Posterior cingulate gyrus (tissue), 11 donors: ENCODE measurements at regions of chr17 and their contacts with region 1.

Region 1: DNA sequence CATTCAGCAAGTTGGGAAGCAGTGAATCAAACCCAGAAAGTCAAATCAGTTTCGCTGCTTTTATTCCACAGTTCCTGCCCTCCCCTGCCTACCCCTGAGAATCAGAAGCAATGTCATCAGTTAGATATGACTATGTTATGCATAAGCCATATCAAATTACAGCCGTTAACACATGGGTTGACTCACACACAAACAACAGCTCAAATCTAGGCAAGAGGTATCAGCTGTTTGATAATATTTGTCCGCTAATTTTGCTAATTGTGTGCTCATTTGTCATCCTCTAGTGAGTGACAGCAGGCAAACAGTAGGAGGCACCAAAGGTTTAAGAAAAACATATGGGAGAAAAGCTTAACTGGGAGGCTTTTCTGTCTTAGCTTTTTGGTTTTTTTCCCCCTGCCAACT is 327.4 kb upstream of the CCL2 start:
- DNase-seq: no peak

Region 2: DNA sequence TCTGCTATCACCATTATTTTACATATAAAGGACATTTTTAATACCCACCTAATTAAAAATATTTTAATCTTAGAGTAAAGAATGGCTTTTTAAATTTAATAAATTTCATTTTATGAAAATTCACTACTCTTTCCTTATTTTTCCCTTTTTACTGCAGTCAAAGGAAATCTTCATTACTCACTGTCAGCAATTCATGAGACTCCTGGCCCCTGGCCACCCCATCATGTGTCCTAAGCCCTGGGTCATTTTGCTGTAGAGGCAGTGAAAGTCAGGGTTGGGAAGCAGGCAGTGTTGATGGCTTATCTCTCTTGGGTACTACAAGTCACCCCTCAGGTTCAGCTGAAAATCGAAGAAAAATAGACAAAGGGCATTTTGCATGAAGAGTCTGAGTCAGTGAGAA is 141.3 kb before region 1 on chr17:
- intact Hi-C with region 1: loop called (anchors 10 kb)
- DNase-seq: no peak

Region 3: GRCh38 chr17:33949100-33949499 is 21.4 kb after region 1 on chr17:
- intact Hi-C with region 1: no loop called
- DNase-seq: no peak

Region 4: DNA sequence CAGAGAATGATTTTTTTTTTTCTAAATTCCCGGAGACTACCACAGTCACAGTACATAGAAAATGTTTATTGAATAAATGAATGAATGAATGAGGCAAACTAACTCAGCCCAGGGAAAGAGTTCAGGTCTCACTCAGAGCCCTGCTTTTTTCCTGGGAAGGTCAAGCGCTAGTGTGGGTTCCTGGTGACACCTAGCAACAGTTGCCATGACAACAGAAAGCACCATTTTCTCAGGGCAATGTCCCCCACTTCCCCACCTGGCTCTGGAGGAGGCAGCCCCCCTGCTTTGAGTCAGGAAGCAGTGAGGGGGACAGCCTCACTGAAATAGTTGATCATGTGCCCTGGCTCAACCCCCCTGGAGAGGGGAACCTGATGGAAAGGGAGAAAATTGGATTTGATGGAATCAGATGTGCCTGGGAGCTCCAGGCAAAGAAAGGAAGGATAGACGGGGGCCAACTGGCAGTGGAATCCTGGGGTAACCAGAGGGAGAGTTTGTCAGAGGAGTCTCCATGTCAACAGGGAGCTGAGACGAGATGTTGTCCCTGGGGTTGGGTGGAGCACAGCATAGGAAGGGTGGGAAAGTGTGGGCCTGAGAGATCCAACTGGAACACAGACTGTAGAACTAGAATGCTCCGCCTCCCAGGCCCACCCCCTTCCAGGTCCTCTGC is 85.1 kb after region 1 on chr17:
- intact Hi-C with region 1: no loop called
- DNase-seq: no peak

Region 5: DNA sequence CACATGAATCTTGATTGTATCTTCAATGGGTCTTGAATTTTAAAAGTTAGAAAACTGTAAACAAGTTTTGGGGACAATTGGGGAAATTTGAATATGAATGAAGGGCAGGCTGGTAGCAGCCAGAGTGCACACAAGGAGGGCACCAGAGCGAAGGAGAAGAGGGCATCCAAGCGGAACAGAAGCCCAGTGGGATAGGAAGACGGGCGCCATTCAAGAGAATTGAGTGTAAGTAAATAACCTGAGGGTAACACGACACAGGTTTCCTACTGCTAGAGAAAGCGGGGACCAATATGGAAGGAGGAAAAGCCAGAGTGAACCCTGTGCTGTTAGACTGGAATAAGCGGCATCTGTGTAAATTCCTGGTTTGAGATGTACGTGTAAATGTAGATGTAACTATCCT is 212.3 kb after region 1 on chr17:
- intact Hi-C with region 1: loop called (anchors 5 kb)
- DNase-seq: no peak

Region 6: GRCh38 chr17:34163646-34164045 is 235.9 kb after region 1 on chr17:
- intact Hi-C with region 1: loop called (anchors 5 kb)
- DNase-seq: peak in 4 of 10 donors; percentile 11 to 81 (median 34)